H1 (cell line): ENCODE measurements at regions of chr7 and their contacts with region 1.

Region 1: GRCh38 chr7:151110941-151111645 is 24.8 kb downstream of the AGAP3 start:
- DNase-seq: peak in 1 of 2 experiments; percentile 91
- H3K4me3 ChIP-seq: no peak overlapping the region
- H3K27ac ChIP-seq: no peak overlapping the region
- H3K4me1 ChIP-seq: peaks cover 0 to 21% (median 15%) of the 10 kb centered on the region in 4 experiments; a peak in 6 of 7 replicates
- H3K27me3 ChIP-seq: peaks cover 0 to 11% (median 7%) of the 10 kb centered on the region in 4 experiments; a peak in 3 of 7 replicates
- CTCF ChIP-seq: peak in 2 of 3 experiments; percentile 95 to 96; a peak in 3 of 4 replicates
- EP300 ChIP-seq: no peak
- POLR2A ChIP-seq: no peak
- RAD21 ChIP-seq: peak; percentile 92 to 93

Region 2: GRCh38 chr7:151008511-151009323 is 102.4 kb before region 1 on chr7:
- CTCF ChIA-PET with region 1: interaction called, 112 read pairs
- POLR2A ChIA-PET with region 1: interaction called, 3 read pairs
- DNase-seq: peak; percentile 75 to 99
- H3K4me3 ChIP-seq: peak overlapping the region in 1 of 4 experiments; percentile 27; a peak in 1 of 8 replicates
- H3K27ac ChIP-seq: no peak overlapping the region
- H3K4me1 ChIP-seq: peaks cover 0 to 28% (median 22%) of the 10 kb centered on the region in 4 experiments; a peak in 6 of 7 replicates
- H3K27me3 ChIP-seq: peaks cover 0 to 3% (median 0%) of the 10 kb centered on the region in 4 experiments; a peak in 2 of 7 replicates
- CTCF ChIP-seq: peak in 2 of 3 experiments; percentile 90 to 92; a peak in 3 of 4 replicates
- EP300 ChIP-seq: 0 out of 3 replicates have a peak, but pooled peaks of 1 of the 2 experiments have one; percentile 22
- POLR2A ChIP-seq: no peak
- RAD21 ChIP-seq: peak; percentile 21 to 53; a peak in 3 of 4 replicates

Region 3: DNA sequence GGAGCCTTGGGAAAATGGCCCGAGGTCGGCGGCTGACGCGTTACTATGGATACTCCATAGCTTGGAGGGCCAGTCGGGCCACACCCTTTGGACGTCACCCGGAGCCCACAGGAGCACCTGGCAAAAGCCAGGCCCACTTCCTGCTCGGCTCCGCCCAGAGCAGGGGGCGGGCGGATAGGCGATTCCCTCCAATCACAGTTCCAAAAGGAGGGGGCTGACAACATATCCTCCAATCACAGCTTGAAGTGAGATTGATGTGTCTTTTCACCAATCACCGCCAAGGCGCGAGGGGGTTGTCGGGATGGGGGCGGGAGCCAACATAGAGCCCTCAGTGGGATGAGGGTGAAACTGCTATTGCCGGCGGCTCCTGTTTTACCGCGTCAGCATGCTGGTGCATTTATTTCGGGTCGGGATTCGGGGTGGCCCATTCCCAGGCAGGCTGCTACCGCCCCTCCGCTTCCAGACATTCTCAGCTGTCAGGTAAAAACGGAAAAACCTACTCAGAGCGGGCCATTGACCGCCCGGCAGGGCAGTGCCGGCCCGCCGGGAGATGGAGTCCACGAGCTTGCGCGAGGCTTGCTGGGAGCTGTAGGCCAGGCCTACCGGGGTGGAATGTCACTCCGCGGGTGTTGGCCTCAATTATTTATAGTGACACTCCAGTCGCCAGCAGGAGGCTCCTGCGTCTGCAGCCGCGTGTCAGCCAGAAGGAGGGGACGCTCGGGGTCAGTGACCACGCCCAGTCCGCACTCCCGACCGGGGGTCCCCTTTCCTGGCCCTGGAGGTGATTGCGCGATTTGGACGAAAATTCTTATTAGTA is 82.8 kb before region 1 on chr7 and contains the start of gene ABCB8:
- CTCF ChIA-PET with region 1: interaction called, 35 read pairs
- POLR2A ChIA-PET with region 1: interaction called, 3 read pairs
- DNase-seq: peak; percentile 99
- H3K4me3 ChIP-seq: peak within 1 kb of the TSS; percentile 66 to 97 (median 80)
- H3K27ac ChIP-seq: peak within 1 kb of the TSS; percentile 15; the same call in 1 of the 2 replicates
- H3K4me1 ChIP-seq: peaks cover 0 to 4% (median 2%) of the 10 kb centered on the region in 4 experiments; a peak in 2 of 7 replicates
- H3K27me3 ChIP-seq: peaks cover 0 to 4% (median 0%) of the 10 kb centered on the region in 4 experiments; a peak in 2 of 7 replicates
- CTCF ChIP-seq: peak; percentile 23 to 43 (median 30)
- EP300 ChIP-seq: no peak
- POLR2A ChIP-seq: no peak
- RAD21 ChIP-seq: peak; percentile 21 to 51; a peak in 3 of 4 replicates
- total RNA-seq, gene ABCB8: 22.2 and 27.0 TPM in 2 replicates

Region 4: GRCh38 chr7:151068068-151068773 is 42.9 kb before region 1 on chr7:
- CTCF ChIA-PET with region 1: interaction called, 88 read pairs
- POLR2A ChIA-PET with region 1: interaction called, 9 read pairs
- DNase-seq: no peak
- H3K4me3 ChIP-seq: no peak overlapping the region
- H3K27ac ChIP-seq: no peak overlapping the region
- H3K4me1 ChIP-seq: peaks cover 3 to 9% (median 7%) of the 10 kb centered on the region in 4 experiments
- H3K27me3 ChIP-seq: no peaks in the 10 kb centered on the region
- CTCF ChIP-seq: no peak
- EP300 ChIP-seq: no peak
- POLR2A ChIP-seq: no peak
- RAD21 ChIP-seq: no peak

Region 5: GRCh38 chr7:151080522-151081169 is 30.4 kb before region 1 on chr7 and contains the start of gene FASTK:
- CTCF ChIA-PET with region 1: interaction called, 448 read pairs
- POLR2A ChIA-PET with region 1: interaction called, 26 read pairs
- DNase-seq: peak in 1 of 2 experiments; percentile 88
- H3K4me3 ChIP-seq: peak within 1 kb of the TSS; percentile 79 to 94 (median 88)
- H3K27ac ChIP-seq: peak within 1 kb of the TSS; percentile 76
- H3K4me1 ChIP-seq: peaks cover 3 to 43% (median 27%) of the 10 kb centered on the region in 4 experiments
- H3K27me3 ChIP-seq: peaks cover 0 to 7% (median 5%) of the 10 kb centered on the region in 4 experiments; a peak in 5 of 7 replicates
- CTCF ChIP-seq: no peak; a peak in 1 of 4 replicates
- EP300 ChIP-seq: 0 out of 3 replicates have a peak, but pooled peaks of 1 of the 2 experiments have one; percentile 42
- POLR2A ChIP-seq: peak in 1 of 2 experiments; percentile 62; a peak in 2 of 3 replicates
- RAD21 ChIP-seq: no peak
- total RNA-seq, gene FASTK: 39.4 and 43.8 TPM in 2 replicates

Region 6: DNA sequence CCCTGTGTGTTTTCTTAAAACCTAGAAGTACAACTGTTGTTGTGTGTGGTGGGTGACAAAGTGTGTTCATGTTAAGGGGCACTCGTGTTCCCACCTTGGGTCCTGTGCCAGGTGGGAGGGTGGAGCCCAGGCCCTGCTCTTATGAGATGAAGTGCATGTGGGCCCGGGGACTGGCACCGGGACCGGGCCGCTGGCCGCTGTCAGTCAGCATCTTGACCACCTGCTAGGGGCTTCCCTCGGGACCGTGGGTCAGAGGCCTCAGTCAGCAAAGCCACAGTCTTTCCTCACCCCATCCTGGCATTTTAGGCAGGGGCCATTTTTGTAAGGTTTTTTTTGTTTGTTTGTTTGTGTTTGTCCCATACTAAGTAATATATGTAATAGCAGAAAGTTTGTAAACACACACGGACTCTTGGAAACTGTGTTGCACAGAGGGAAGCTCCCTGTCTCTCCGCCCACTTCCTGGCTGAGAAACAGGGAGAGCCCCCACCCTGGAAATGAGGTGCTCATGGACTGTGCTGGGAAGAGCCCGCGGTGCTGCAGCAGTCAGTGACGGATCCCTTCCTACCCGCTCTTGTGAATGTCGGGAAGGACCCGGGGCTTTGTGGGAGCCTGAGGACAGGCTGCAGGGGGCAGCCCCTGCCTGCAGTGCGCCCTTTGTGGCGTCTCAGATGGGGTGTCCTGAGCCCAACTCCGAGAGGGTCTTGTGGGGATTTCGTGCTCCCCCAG is 11.4 kb before region 1 on chr7:
- CTCF ChIA-PET with region 1: interaction called, 448 read pairs
- POLR2A ChIA-PET with region 1: interaction called, 4 read pairs
- DNase-seq: no peak
- H3K4me3 ChIP-seq: no peak overlapping the region
- H3K27ac ChIP-seq: no peak overlapping the region
- H3K4me1 ChIP-seq: peaks cover under 1 to 25% (median 14%) of the 10 kb centered on the region in 4 experiments
- H3K27me3 ChIP-seq: no peaks in the 10 kb centered on the region
- CTCF ChIP-seq: no peak
- EP300 ChIP-seq: no peak
- POLR2A ChIP-seq: no peak
- RAD21 ChIP-seq: no peak